ENCODE measurements at regions of chr1 and their contacts with region 1.

Region 1: DNA sequence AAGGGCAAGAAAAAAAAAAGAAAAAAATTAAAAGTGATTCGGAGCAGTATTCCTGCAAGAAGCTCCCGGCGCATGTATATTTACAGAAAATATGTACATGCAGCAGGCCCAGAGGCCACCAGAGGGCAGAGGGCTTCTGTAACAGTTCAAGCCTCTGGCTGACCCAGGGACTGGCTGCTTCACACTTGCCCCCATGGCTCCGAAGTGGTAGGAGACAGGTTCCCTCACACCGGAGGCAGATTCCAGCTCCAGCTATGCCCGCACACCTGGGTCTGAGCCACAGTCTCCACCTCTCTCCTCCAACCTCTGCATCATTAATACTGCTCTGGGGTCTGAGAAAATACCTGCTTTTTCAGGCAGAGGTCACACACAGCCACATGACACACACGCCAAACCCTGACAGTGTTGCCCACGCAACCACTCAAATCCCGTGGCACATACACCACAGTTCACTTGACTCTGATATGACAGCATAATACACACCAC is 2.2 kb upstream of the ARHGAP30 start:
- DNase-seq: no peak
- ATAC-seq: peak; percentile 16
- H3K4me3 Mint-ChIP-seq: no peak overlapping the region
- H3K27ac Mint-ChIP-seq: peak overlapping the region; percentile 62
- H3K4me1 Mint-ChIP-seq: peaks cover 39% of the 10 kb centered on the region
- H3K27me3 Mint-ChIP-seq: no peaks in the 10 kb centered on the region
- CTCF ChIP-seq: peak; percentile 46

Region 2: GRCh38 chr1:160997323-160998038 is 74.4 kb before region 1 on chr1:
- CTCF ChIA-PET with region 1: interaction called, 18 read pairs
- POLR2A ChIA-PET with region 1: interaction called, 11 read pairs
- intact Hi-C with region 1: loop called (anchors 2 kb)
- DNase-seq: peak; percentile 29
- ATAC-seq: peak; percentile 81
- H3K4me3 Mint-ChIP-seq: no peak overlapping the region
- H3K27ac Mint-ChIP-seq: peak overlapping the region; percentile 42
- H3K4me1 Mint-ChIP-seq: peaks cover 3% of the 10 kb centered on the region
- H3K27me3 Mint-ChIP-seq: no peaks in the 10 kb centered on the region
- CTCF ChIP-seq: no peak

Region 3: DNA sequence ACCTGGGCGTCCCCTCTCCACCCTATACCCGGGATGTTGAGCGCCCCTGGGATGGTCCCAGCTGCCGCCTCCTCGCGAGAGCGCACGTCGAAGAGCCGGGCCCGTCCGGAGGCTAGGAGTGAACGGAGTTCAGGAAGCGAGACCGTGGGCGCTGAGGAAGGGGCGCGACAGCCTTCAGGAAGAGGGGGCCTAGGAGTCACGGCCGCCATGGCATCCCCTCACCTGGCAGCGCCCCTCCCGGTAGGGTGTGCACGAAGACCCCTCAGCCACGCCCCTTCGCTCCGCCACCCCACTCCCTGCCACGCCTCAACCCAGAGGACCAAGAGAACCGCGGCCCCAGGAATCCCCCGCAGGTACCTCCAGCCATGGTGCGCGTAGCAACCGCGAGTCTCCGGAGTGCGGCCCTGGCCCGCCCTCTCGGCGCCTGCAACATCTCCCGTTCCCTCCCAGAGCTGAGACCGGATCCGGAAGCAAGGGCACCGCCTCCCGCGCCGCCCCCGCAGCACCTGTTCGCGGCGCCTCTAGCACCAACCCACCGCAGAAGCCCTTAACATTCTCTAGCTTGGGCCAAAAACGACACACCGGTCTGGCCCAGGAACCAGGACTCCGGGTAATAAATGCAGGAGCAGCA is 33.3 kb before region 1 on chr1 and contains the start of gene TSTD1:
- CTCF ChIA-PET with region 1: interaction called, 37 read pairs
- POLR2A ChIA-PET with region 1: interaction called, 285 read pairs
- intact Hi-C with region 1: loop called (anchors 1 kb)
- DNase-seq: peak; percentile 80
- ATAC-seq: peak; percentile 84
- H3K4me3 Mint-ChIP-seq: peak within 1 kb of the TSS; percentile 91
- H3K27ac Mint-ChIP-seq: peak within 1 kb of the TSS; percentile 95
- H3K4me1 Mint-ChIP-seq: peaks cover 53% of the 10 kb centered on the region
- H3K27me3 Mint-ChIP-seq: no peaks in the 10 kb centered on the region
- CTCF ChIP-seq: no peak
- total RNA-seq, gene TSTD1: 69.8 and 70.2 TPM in 2 replicates

Region 4: GRCh38 chr1:161091756-161092517 is 20.0 kb after region 1 on chr1:
- CTCF ChIA-PET with region 1: interaction called, 95 read pairs
- POLR2A ChIA-PET with region 1: interaction called, 74 read pairs
- intact Hi-C with region 1: loop called (anchors 2 kb)
- DNase-seq: no peak
- ATAC-seq: no peak
- H3K4me3 Mint-ChIP-seq: no peak overlapping the region
- H3K27ac Mint-ChIP-seq: no peak overlapping the region
- H3K4me1 Mint-ChIP-seq: peaks cover 17% of the 10 kb centered on the region
- H3K27me3 Mint-ChIP-seq: no peaks in the 10 kb centered on the region
- CTCF ChIP-seq: no peak

Region 5: GRCh38 chr1:161111527-161111926 is 39.6 kb after region 1 on chr1:
- CTCF ChIA-PET with region 1: no interaction called
- POLR2A ChIA-PET with region 1: no interaction called
- intact Hi-C with region 1: no loop called
- DNase-seq: no peak
- ATAC-seq: no peak
- H3K4me3 Mint-ChIP-seq: no peak overlapping the region
- H3K27ac Mint-ChIP-seq: no peak overlapping the region
- H3K4me1 Mint-ChIP-seq: peaks cover 48% of the 10 kb centered on the region
- H3K27me3 Mint-ChIP-seq: no peaks in the 10 kb centered on the region
- CTCF ChIP-seq: no peak

Region 6: GRCh38 chr1:161132410-161133219 is 60.7 kb after region 1 on chr1 and contains the start of gene DEDD:
- CTCF ChIA-PET with region 1: interaction called, 5 read pairs
- POLR2A ChIA-PET with region 1: interaction called, 20 read pairs
- intact Hi-C with region 1: loop called (anchors 1 kb)
- DNase-seq: peak; percentile 88
- ATAC-seq: peak; percentile 92
- H3K4me3 Mint-ChIP-seq: no peak within 1 kb of the TSS
- H3K27ac Mint-ChIP-seq: no peak within 1 kb of the TSS
- H3K4me1 Mint-ChIP-seq: peaks cover 33% of the 10 kb centered on the region
- H3K27me3 Mint-ChIP-seq: no peaks in the 10 kb centered on the region
- CTCF ChIP-seq: no peak
- total RNA-seq, gene DEDD: 39.5 and 40.5 TPM in 2 replicates

Region 7: DNA sequence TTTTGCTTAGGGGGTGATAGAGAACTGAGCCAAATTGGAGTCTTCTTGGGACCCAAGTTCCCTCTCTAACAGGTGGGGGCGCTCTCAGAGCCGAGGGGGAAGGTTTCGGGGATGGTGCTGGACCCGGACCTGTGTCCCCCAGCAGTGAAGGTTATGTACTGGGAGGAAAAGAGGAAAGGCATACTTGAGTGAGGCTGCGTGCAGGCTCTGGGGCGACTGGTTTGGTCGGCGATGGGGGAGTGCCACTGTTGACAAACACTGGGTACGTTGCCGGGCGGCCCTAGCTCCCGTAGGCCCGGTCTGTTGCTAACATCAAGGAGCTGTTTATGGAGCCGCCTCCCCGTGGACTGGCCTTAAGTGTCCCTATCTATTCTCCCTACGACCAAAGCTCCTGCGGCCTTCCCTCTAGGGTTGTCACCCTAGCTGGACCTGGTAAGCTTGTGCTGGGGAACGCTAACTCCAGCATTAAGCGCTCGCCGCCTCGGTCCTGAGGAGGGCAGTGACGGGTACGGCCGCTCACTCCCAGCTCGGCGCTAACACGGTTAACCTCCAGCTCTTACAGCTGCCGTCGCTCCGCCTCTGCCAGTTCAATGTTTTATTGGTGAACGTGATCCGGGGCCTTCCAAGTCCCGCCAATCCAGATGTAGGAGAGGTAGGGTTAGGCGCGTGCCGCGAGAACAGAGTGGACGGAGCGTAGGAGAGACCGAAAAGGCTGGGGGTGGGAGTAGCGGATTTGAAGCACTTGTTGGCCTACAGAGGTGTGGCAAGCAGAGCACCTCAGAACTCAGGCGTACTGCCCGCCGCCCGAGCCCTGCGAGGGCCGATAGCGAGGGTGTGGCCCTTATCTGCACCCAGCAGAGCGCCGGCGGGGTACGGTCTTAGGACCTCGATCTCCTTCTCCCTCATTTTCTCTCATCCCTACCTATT is 94.1 kb after region 1 on chr1 and contains the start of gene PPOX:
- CTCF ChIA-PET with region 1: interaction called, 4 read pairs
- POLR2A ChIA-PET with region 1: interaction called, 20 read pairs
- intact Hi-C with region 1: no loop called
- DNase-seq: peak; percentile 82
- ATAC-seq: peak; percentile 94
- H3K4me3 Mint-ChIP-seq: peak within 1 kb of the TSS; percentile 88
- H3K27ac Mint-ChIP-seq: peak within 1 kb of the TSS; percentile 98
- H3K4me1 Mint-ChIP-seq: peaks cover 48% of the 10 kb centered on the region
- H3K27me3 Mint-ChIP-seq: no peaks in the 10 kb centered on the region
- CTCF ChIP-seq: no peak
- total RNA-seq, gene PPOX: 31.5 and 40.7 TPM in 2 replicates

Region 8: DNA sequence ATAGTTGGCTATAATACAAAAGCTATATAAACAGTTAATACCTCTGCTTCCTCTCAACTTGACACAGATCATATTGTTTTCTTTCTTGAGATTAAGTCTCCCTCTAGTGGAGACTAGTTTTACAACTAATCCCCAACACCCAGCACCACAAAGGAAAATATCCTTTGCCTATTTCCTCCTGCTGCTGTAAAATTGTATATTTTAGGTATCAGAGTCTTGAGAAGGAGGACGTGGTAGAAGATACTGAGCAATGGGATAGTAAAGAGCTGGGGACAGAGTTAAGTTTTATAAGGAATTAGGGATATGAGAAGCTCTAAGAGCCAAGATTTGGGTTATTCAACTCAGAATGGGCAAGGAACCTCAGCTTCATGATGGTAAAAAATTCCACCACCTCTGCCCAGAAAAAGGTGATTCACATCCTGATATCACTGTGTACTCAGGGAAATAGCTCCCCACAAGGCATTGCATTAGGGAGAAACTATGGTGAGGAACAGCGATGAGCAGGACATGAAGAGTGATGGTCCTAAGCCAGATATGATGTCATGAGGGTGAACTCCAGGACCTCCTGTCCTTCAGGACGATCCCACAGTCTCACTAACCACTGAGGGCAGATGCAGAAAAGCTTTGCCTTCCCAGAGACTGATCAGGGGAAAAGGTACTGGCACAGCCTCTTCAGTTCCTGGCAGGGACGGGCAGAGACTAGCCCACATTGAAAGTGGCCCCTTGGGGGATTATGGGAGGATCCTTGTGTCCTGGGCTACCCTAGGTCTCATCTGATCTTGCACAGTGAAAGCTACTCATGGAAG is 310.5 kb after region 1 on chr1:
- CTCF ChIA-PET with region 1: interaction called, 3 read pairs
- POLR2A ChIA-PET with region 1: no interaction called
- intact Hi-C with region 1: loop called (anchors 1 kb)
- DNase-seq: no peak
- ATAC-seq: peak; percentile 90
- H3K4me3 Mint-ChIP-seq: no peak overlapping the region
- H3K27ac Mint-ChIP-seq: no peak overlapping the region
- H3K4me1 Mint-ChIP-seq: peaks cover 7% of the 10 kb centered on the region
- H3K27me3 Mint-ChIP-seq: no peaks in the 10 kb centered on the region
- CTCF ChIP-seq: no peak

Region 9: DNA sequence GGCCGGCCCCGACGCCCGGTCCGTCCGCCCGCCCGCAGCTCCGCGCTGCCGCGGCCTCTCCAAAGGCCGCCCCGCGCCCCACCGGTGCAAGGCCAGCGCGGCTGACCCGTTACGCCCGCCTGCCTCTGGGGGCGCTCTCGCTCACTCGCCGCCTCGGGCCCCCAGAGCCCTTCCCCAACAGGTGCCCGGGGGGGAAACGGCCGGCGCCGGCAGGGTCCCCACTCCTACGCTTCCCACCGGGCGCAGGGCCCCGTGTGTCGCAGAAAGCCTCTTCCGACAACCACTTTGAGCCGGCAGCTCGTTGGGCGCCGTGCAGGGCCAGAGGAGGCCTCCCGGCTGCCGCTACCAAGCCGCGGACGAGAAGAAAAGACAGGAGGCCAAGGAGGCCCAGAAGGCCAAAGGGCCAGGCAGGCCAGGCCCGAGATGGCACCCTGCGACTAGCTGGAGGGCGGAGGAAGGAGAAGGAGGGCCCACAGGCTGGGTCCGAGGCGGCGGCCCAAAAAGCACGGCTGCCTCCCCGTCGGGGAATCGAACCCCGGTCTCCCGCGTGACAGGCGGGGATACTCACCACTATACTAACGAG is 368.5 kb after region 1 on chr1:
- CTCF ChIA-PET with region 1: no interaction called
- POLR2A ChIA-PET with region 1: no interaction called
- intact Hi-C with region 1: no loop called
- DNase-seq: peak; percentile 78
- ATAC-seq: peak; percentile 59
- H3K4me3 Mint-ChIP-seq: peak overlapping the region; percentile 88
- H3K27ac Mint-ChIP-seq: peak overlapping the region; percentile 78
- H3K4me1 Mint-ChIP-seq: peaks cover 15% of the 10 kb centered on the region
- H3K27me3 Mint-ChIP-seq: peaks cover 18% of the 10 kb centered on the region
- CTCF ChIP-seq: no peak

Region 10: DNA sequence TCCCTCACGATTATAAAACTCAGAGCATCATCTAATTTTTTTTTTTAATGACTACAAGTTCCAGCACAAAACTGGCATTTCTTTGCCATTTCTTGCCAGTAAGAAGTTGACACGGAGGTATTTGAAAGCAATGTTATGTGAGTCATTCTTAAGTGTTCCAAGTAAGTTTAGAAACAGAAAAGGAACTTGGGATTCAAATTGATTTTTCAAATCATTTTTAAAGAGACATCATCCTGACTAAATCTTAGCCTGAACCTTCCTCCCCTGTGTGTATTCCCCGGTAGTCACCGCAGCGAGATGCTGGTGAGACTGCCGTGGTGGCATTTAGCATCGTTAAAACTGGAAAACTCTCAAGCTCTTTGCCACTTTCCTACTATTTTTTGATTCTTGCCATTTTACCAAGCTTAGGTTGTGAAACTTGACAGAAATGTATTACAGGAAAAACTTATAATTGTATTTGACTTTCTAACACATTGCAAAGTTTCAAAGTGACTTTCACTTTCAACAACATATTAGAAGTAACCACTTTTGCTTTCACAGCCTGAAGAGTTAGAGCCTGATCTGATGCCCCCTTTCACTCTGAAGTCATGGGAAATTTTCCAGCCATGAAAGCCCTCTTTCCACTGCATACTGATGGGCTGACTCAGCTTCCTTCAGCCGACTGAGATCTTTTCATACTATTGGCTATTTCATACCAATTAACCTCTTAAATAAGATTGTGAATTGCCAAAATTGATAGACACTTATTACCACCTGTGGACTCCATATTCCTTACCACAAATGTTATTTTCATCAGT is 890.4 kb after region 1 on chr1:
- CTCF ChIA-PET with region 1: no interaction called
- POLR2A ChIA-PET with region 1: no interaction called
- intact Hi-C with region 1: no loop called
- DNase-seq: no peak
- ATAC-seq: no peak
- H3K4me3 Mint-ChIP-seq: peak overlapping the region; percentile 79
- H3K27ac Mint-ChIP-seq: no peak overlapping the region
- H3K4me1 Mint-ChIP-seq: peaks cover 11% of the 10 kb centered on the region
- H3K27me3 Mint-ChIP-seq: no peaks in the 10 kb centered on the region
- CTCF ChIP-seq: no peak